B cell (primary cell): ENCODE measurements at regions of chr9 and their contacts with region 1.

Region 1: DNA sequence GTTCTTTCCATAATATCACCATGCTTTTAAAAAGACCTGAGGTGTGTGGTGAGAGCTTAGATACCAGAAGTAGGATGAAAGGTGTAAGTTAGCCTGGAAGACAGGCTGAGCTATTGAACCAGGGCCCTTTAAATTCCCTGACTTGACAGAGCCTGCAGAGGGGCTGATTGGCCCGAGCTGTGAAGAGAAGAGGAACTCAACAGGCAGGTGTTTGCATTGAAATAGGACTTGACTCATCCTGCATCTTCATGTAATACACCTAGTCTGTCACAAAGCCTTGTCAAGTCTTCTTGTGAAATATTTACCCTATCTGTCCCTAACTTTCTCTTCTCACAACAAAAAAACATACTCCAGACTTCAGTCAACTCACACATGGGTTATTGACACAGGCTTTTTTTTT is 16.6 kb upstream of the ANP32B start:
- DNase-seq: no peak
- ATAC-seq: no peak
- H3K4me3 ChIP-seq: no peak overlapping the region
- H3K4me3 Mint-ChIP-seq: no peak overlapping the region
- H3K27ac ChIP-seq: no peak overlapping the region
- H3K27ac Mint-ChIP-seq: no peak overlapping the region
- H3K4me1 ChIP-seq: no peaks in the 10 kb centered on the region
- H3K4me1 Mint-ChIP-seq: no peaks in the 10 kb centered on the region
- H3K27me3 ChIP-seq: peaks cover 0 to 6% (median 2%) of the 10 kb centered on the region in 4 experiments
- H3K27me3 Mint-ChIP-seq: peaks cover 13% of the 10 kb centered on the region
- CTCF ChIP-seq: no peak

Region 2: GRCh38 chr9:97990266-97990665 is 23.8 kb after region 1 on chr9:
- CTCF ChIA-PET with region 1: no interaction called
- POLR2A ChIA-PET with region 1: interaction called, 16 read pairs
- intact Hi-C with region 1: no loop called
- DNase-seq: no peak
- ATAC-seq: no peak
- H3K4me3 ChIP-seq: no peak overlapping the region
- H3K4me3 Mint-ChIP-seq: peak overlapping the region; percentile 18
- H3K27ac ChIP-seq: peak overlapping the region in 1 of 2 donors; percentile 39
- H3K27ac Mint-ChIP-seq: peak overlapping the region; percentile 51
- H3K4me1 ChIP-seq: peaks cover 58% of the 10 kb centered on the region in 2 donors
- H3K4me1 Mint-ChIP-seq: peaks cover 89% of the 10 kb centered on the region
- H3K27me3 ChIP-seq: no peaks in the 10 kb centered on the region
- H3K27me3 Mint-ChIP-seq: no peaks in the 10 kb centered on the region
- CTCF ChIP-seq: no peak